ENCODE measurements at regions of chr13 and their contacts with region 1.

Region 1: GRCh38 chr13:45464687-45465453 is at the start of gene COG3:
- DNase-seq: peak; percentile 97
- ATAC-seq: peak; percentile 99
- H3K4me3 Mint-ChIP-seq: peak within 1 kb of the TSS; percentile 93
- H3K27ac Mint-ChIP-seq: peak within 1 kb of the TSS; percentile 93
- H3K4me1 Mint-ChIP-seq: peaks cover 49% of the 10 kb centered on the region
- H3K27me3 Mint-ChIP-seq: no peaks in the 10 kb centered on the region
- total RNA-seq, gene COG3: 18.0 to 19.6 TPM

Region 2: DNA sequence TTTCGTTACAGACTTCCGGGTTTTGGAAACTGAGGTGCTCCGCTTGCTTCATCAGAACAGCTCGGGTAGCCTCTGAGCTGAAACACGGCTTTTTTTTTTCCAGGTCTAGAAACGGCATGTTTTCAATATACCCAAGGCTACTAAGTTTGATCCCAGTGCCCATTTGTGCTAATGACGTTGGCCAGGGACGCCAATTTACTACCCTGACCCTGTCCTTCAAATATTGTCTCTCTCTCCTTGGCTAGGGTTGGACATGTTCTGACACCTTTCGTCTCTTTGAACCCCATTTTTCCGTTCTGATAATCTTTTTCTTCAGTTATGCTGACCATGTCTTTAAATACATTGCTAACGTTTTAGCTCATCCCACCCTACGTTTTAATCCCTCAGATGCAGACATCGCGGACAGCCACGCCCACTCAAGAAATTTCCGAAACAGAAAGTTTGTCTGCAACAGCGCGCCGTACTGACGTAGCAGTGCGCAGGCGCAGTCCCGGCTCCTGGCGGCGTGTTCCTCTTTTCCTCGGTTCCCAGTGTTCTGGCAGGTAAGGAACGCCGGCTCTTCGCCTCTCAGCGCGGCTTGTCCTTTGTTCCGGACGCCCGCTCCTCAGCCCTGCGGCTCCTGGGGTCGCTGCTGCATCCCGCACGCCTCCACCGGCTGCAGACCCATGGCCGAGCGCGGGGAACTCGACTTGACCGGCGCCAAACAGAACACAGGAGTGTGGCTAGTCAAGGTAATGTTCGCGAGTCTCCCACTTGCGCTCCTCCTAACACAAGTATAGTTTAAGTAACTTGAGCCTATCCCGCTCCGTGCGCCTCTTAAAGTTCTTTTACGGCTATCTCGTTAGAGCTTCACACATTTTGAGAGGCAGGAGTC is 344.6 kb before region 1 on chr13 and contains the start of gene GTF2F2:
- CTCF ChIA-PET with region 1: no interaction called
- POLR2A ChIA-PET with region 1: no interaction called
- intact Hi-C with region 1: loop called in 1 of 2 experiments (anchors 10 kb)
- DNase-seq: peak; percentile 90
- ATAC-seq: peak; percentile 68
- H3K4me3 Mint-ChIP-seq: no peak within 1 kb of the TSS
- H3K27ac Mint-ChIP-seq: no peak within 1 kb of the TSS
- H3K4me1 Mint-ChIP-seq: peaks cover 5% of the 10 kb centered on the region
- H3K27me3 Mint-ChIP-seq: no peaks in the 10 kb centered on the region
- total RNA-seq, gene GTF2F2: 19.9 to 25.6 TPM

Region 3: DNA sequence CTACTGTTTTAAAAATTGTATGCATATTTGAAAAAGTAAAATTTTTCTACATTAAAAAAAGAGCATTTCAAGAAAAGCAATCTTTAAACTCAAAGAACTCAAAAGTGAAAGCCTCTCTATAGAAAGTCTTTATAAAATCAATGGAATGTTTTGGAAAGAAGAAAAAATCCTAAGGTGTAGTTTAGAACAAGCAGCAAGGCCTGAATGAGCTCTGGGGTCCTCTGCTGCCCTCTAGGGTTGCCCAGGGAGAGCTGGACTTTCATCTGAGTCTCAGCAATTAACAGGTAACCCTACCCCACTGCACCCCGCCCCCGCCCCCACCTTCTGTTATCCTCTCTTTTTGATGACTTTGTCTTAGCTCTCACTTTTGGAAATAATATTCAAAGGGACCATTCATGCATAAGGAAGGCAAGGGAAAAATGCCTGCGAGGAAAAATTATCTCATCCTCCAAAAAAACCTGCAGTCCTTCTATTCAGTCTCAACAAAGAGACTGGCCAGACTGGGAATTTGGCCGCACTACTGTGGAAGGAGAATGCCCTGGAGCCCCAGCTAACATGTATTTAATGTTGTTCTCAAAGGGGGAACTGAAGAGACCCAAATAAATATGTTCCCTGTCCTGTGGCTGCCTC is 70.8 kb before region 1 on chr13:
- CTCF ChIA-PET with region 1: interaction called, 5 read pairs
- POLR2A ChIA-PET with region 1: no interaction called
- intact Hi-C with region 1: loop called in 1 of 2 experiments (anchors 1 kb)
- DNase-seq: peak; percentile 56
- ATAC-seq: no peak
- H3K4me3 Mint-ChIP-seq: no peak overlapping the region
- H3K27ac Mint-ChIP-seq: no peak overlapping the region
- H3K4me1 Mint-ChIP-seq: peaks cover 46% of the 10 kb centered on the region
- H3K27me3 Mint-ChIP-seq: no peaks in the 10 kb centered on the region

Region 4: GRCh38 chr13:45417790-45418534 is 46.9 kb before region 1 on chr13 and contains the start of gene SLC25A30:
- CTCF ChIA-PET with region 1: interaction called, 8 read pairs
- POLR2A ChIA-PET with region 1: interaction called, 8 read pairs
- intact Hi-C with region 1: loop called (anchors 1 kb)
- DNase-seq: peak; percentile 94
- ATAC-seq: peak; percentile 92
- H3K4me3 Mint-ChIP-seq: peak within 1 kb of the TSS; percentile 84
- H3K27ac Mint-ChIP-seq: peak within 1 kb of the TSS; percentile 92
- H3K4me1 Mint-ChIP-seq: peaks cover 23% of the 10 kb centered on the region
- H3K27me3 Mint-ChIP-seq: no peaks in the 10 kb centered on the region
- total RNA-seq, gene SLC25A30: 17.7 to 18.4 TPM

Region 5: DNA sequence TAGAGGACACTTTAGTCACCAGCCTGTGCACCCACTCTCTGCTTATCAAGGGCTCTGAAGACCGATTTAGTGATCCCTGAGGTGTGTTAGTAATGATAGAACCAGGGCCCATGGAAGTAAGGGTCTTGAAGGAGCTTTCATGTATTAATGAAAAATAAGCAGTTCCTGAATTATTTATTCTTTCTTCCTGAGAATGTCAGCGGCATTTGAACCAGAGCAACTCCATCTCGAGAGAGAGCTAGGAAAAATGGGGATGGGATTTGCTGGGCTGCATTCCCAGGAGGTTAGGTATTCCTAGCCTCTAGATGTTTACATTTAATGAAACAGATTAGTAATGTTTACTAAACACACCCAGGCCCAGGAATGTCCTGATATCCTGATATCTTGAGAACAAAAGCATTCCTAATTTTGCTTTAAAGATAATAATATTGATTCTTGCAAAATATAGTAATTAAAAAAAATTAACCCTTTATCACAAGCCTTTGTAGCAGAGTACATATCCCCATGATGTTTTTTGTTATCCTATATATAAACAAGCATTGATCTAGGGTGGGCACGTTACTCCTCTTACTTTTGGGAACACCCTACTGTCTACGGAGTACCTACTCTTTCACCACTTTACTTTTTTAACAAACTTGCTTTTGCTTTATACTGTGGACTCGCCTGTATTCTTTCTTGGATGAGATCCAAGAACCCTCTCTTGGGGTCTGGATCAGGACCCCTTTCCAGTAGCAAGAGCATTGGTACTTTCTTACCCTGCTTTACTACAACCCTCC is 63.0 kb after region 1 on chr13:
- CTCF ChIA-PET with region 1: no interaction called
- POLR2A ChIA-PET with region 1: no interaction called
- intact Hi-C with region 1: no loop called
- DNase-seq: no peak
- ATAC-seq: no peak
- H3K4me3 Mint-ChIP-seq: no peak overlapping the region
- H3K27ac Mint-ChIP-seq: no peak overlapping the region
- H3K4me1 Mint-ChIP-seq: peaks cover 10% of the 10 kb centered on the region
- H3K27me3 Mint-ChIP-seq: no peaks in the 10 kb centered on the region

Region 6: GRCh38 chr13:45538382-45538781 is 73.5 kb after region 1 on chr13:
- CTCF ChIA-PET with region 1: no interaction called
- POLR2A ChIA-PET with region 1: no interaction called
- intact Hi-C with region 1: no loop called
- DNase-seq: no peak
- ATAC-seq: peak; percentile 53
- H3K4me3 Mint-ChIP-seq: no peak overlapping the region
- H3K27ac Mint-ChIP-seq: no peak overlapping the region
- H3K4me1 Mint-ChIP-seq: peaks cover 2% of the 10 kb centered on the region
- H3K27me3 Mint-ChIP-seq: no peaks in the 10 kb centered on the region

Region 7: GRCh38 chr13:45658586-45659235 is 193.8 kb after region 1 on chr13:
- CTCF ChIA-PET with region 1: no interaction called
- POLR2A ChIA-PET with region 1: no interaction called
- intact Hi-C with region 1: no loop called
- DNase-seq: no peak
- ATAC-seq: no peak
- H3K4me3 Mint-ChIP-seq: no peak overlapping the region
- H3K27ac Mint-ChIP-seq: no peak overlapping the region
- H3K4me1 Mint-ChIP-seq: peaks cover 8% of the 10 kb centered on the region
- H3K27me3 Mint-ChIP-seq: no peaks in the 10 kb centered on the region

Region 8: GRCh38 chr13:46052319-46053161 is 587.7 kb after region 1 on chr13 and contains the start of gene ZC3H13:
- CTCF ChIA-PET with region 1: no interaction called
- POLR2A ChIA-PET with region 1: no interaction called
- intact Hi-C with region 1: loop called in 1 of 2 experiments (anchors 1 kb)
- DNase-seq: peak; percentile 96
- ATAC-seq: peak; percentile 99
- H3K4me3 Mint-ChIP-seq: peak within 1 kb of the TSS; percentile 83
- H3K27ac Mint-ChIP-seq: peak within 1 kb of the TSS; percentile 94
- H3K4me1 Mint-ChIP-seq: peaks cover 34% of the 10 kb centered on the region
- H3K27me3 Mint-ChIP-seq: peaks cover 2% of the 10 kb centered on the region
- total RNA-seq, gene ZC3H13: 38.5 to 52.8 TPM